Motor neuron (in vitro differentiated cells): ENCODE measurements at regions of chr1 and their contacts with region 1.

Region 1: GRCh38 chr1:20223551-20224419 is 37.5 kb upstream of the PLA2G2C start:
- ATAC-seq: peak in 5 of 8 experiments; percentile 85 to 92 (median 87)
- H3K4me3 ChIP-seq: peak overlapping the region in 1 of 5 donors; percentile 3
- H3K27ac ChIP-seq: peak overlapping the region; percentile 51 to 53
- H3K4me1 ChIP-seq: peaks cover 32 to 34% of the 10 kb centered on the region in 2 donors

Region 2: DNA sequence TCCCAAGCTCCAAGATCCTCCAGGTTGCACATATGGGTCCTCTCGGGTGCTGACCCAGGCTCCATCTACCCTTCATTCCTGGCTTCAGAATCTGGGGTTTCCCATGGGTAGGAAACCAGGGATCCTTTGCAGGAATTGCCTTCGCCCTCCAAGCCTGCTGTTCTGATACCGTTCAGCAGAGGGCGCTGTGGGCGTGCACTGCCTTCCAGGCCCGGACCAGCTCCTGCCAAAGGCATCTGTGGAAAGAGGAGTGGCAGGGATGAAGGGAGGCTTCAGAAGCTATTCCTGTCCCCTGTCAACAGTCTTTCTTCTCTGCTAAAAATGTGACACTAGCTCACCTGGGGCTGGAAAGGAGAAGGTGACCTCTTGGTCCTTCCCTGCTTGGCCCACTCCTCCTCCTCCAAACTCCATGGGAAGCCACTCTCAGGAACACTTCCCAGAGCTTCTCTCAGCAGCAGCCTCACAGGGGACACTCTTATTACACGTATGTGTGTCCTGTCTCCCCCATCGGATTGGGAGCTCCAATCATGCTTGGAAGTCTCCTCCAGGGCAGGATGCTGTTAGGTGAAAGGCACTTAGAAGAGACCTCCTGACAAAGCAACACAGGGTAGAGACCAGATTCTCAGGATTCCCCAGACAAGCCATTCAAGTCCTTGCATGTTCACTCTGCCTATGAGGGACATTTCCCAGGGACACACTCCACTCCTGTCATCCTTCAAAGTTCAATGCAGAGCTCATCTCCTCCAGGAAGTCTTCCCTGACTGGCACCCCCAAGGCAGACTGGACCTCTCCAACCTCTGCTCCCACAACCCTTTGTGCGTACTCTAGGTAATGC is 138.2 kb after region 1 on chr1:
- in situ Hi-C with region 1: loop called in 1 of 9 experiments (anchors 10 kb)
- ATAC-seq: peak; percentile 32 to 65 (median 58)
- H3K4me3 ChIP-seq: no peak overlapping the region
- H3K27ac ChIP-seq: no peak overlapping the region
- H3K4me1 ChIP-seq: peaks cover 37 to 41% of the 10 kb centered on the region in 2 donors

Region 3: GRCh38 chr1:20426923-20427322 is 203.1 kb after region 1 on chr1:
- in situ Hi-C with region 1: loop called in 1 of 9 experiments (anchors 10 kb)
- ATAC-seq: peak in 7 of 8 experiments; percentile 44 to 86 (median 64)
- H3K4me3 ChIP-seq: no peak overlapping the region
- H3K27ac ChIP-seq: no peak overlapping the region
- H3K4me1 ChIP-seq: peaks cover 14 to 18% of the 10 kb centered on the region in 2 donors